CD4-positive, alpha-beta memory T cell (primary cell): ENCODE measurements at regions of chr12 and their contacts with region 1.

Region 1: GRCh38 chr12:11508699-11509098 is 113.3 kb upstream of the PRB2 start:
- DNase-seq: no peak
- H3K4me3 ChIP-seq: no peak overlapping the region
- H3K4me3 Mint-ChIP-seq: no peak overlapping the region
- H3K27ac ChIP-seq: no peak overlapping the region
- H3K27ac Mint-ChIP-seq: peak overlapping the region in 1 of 7 donors; percentile 66
- H3K4me1 ChIP-seq: no peaks in the 10 kb centered on the region
- H3K4me1 Mint-ChIP-seq: peaks cover 0 to 5% (median 5%) of the 10 kb centered on the region in 4 donors
- H3K27me3 ChIP-seq: no peaks in the 10 kb centered on the region
- H3K27me3 Mint-ChIP-seq: peaks cover 5 to 6% of the 10 kb centered on the region in 2 donors

Region 2: GRCh38 chr12:11545484-11546330 is 37.0 kb after region 1 on chr12:
- CTCF ChIA-PET with region 1: interaction called, 4 read pairs
- POLR2A ChIA-PET with region 1: interaction called, 3 read pairs
- intact Hi-C with region 1: loop called (anchors 1 kb)
- DNase-seq: peak; percentile 78 to 82 (median 80)
- H3K4me3 ChIP-seq: peak overlapping the region in 1 of 2 donors; percentile 14
- H3K4me3 Mint-ChIP-seq: peak overlapping the region; percentile 71 to 88 (median 78)
- H3K27ac ChIP-seq: peak overlapping the region; percentile 57
- H3K27ac Mint-ChIP-seq: peak overlapping the region; percentile 94 to 99 (median 96)
- H3K4me1 ChIP-seq: peaks cover 55% of the 10 kb centered on the region
- H3K4me1 Mint-ChIP-seq: peaks cover 32 to 68% (median 51%) of the 10 kb centered on the region in 4 donors
- H3K27me3 ChIP-seq: no peaks in the 10 kb centered on the region
- H3K27me3 Mint-ChIP-seq: no peaks in the 10 kb centered on the region